T-cell (primary cell): ENCODE measurements at regions of chr7 and their contacts with region 1.

Region 1: GRCh38 chr7:130961128-130961601 is 227.2 kb upstream of the KLF14 start:
- DNase-seq: peak in 33 of 35 experiments; percentile 26 to 92 (median 75)
- ATAC-seq: peak; percentile 78 to 84 (median 81)
- H3K4me3 ChIP-seq: peak overlapping the region in 1 of 2 donors; percentile 45
- H3K4me3 Mint-ChIP-seq: peak overlapping the region; percentile 79 to 90 (median 87)
- H3K27ac ChIP-seq: peak overlapping the region; percentile 97
- H3K27ac Mint-ChIP-seq: peak overlapping the region; percentile 96
- H3K4me1 ChIP-seq: peaks cover 31 to 57% of the 10 kb centered on the region in 2 experiments
- H3K4me1 Mint-ChIP-seq: peaks cover 42 to 75% (median 72%) of the 10 kb centered on the region in 3 donors
- H3K27me3 ChIP-seq: no peaks in the 10 kb centered on the region
- H3K27me3 Mint-ChIP-seq: no peaks in the 10 kb centered on the region

Region 2: GRCh38 chr7:130912862-130913631 is 48.1 kb before region 1 on chr7:
- CTCF ChIA-PET with region 1: interaction called, 4 to 21 read pairs
- POLR2A ChIA-PET with region 1: interaction called, 4 to 17 read pairs
- DNase-seq: peak; percentile 25 to 90 (median 77)
- ATAC-seq: peak; percentile 89 to 94 (median 92)
- H3K4me3 ChIP-seq: peak overlapping the region; percentile 58 to 96
- H3K4me3 Mint-ChIP-seq: peak overlapping the region; percentile 82 to 86 (median 86)
- H3K27ac ChIP-seq: peak overlapping the region; percentile 89
- H3K27ac Mint-ChIP-seq: peak overlapping the region; percentile 90
- H3K4me1 ChIP-seq: peaks cover 22 to 60% of the 10 kb centered on the region in 2 experiments
- H3K4me1 Mint-ChIP-seq: peaks cover 92 to 93% (median 93%) of the 10 kb centered on the region in 3 donors
- H3K27me3 ChIP-seq: no peaks in the 10 kb centered on the region
- H3K27me3 Mint-ChIP-seq: no peaks in the 10 kb centered on the region

Region 3: GRCh38 chr7:131480384-131481315 is 519.5 kb after region 1 on chr7:
- CTCF ChIA-PET with region 1: no interaction called
- POLR2A ChIA-PET with region 1: no interaction called
- DNase-seq: no peak
- ATAC-seq: no peak
- H3K4me3 ChIP-seq: no peak overlapping the region
- H3K4me3 Mint-ChIP-seq: no peak overlapping the region
- H3K27ac ChIP-seq: no peak overlapping the region
- H3K27ac Mint-ChIP-seq: no peak overlapping the region
- H3K4me1 ChIP-seq: no peaks in the 10 kb centered on the region
- H3K4me1 Mint-ChIP-seq: no peaks in the 10 kb centered on the region
- H3K27me3 ChIP-seq: no peaks in the 10 kb centered on the region
- H3K27me3 Mint-ChIP-seq: no peaks in the 10 kb centered on the region

Region 4: GRCh38 chr7:132815696-132816311 is 1854.6 kb after region 1 on chr7:
- CTCF ChIA-PET with region 1: no interaction called
- POLR2A ChIA-PET with region 1: no interaction called
- DNase-seq: no peak
- ATAC-seq: no peak
- H3K4me3 ChIP-seq: no peak overlapping the region
- H3K4me3 Mint-ChIP-seq: no peak overlapping the region
- H3K27ac ChIP-seq: no peak overlapping the region
- H3K27ac Mint-ChIP-seq: no peak overlapping the region
- H3K4me1 ChIP-seq: no peaks in the 10 kb centered on the region
- H3K4me1 Mint-ChIP-seq: peaks cover 0 to 9% (median 0%) of the 10 kb centered on the region in 3 donors
- H3K27me3 ChIP-seq: no peaks in the 10 kb centered on the region
- H3K27me3 Mint-ChIP-seq: no peaks in the 10 kb centered on the region